PC-9 (cell line): ENCODE measurements at regions of chr6 and their contacts with region 1.

Region 1: GRCh38 chr6:55445648-55446204 is 118.5 kb downstream of the GFRAL start:
- DNase-seq: no peak
- H3K4me3 ChIP-seq: no peak overlapping the region
- H3K27ac ChIP-seq: no peak overlapping the region
- H3K4me1 ChIP-seq: no peaks in the 10 kb centered on the region
- H3K27me3 ChIP-seq: no peaks in the 10 kb centered on the region
- CTCF ChIP-seq: peak; percentile 82

Region 2: DNA sequence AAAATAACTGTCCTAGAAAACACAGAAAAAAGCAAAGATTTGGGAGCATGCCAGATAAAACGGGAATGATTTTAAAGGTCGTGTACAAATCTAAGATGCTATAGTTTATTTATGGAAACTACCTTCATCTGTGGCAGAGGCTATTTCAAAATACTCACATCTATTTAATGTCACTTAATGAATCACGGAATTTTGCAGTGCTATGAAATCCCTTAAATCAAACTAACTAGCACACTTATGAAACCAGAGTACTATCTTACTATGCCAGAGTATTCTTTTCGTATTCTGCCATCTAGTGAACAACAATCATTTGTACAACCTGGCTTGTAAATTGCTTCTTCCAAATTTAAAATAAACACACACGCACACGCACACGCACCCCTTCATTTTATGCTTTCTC is 507.6 kb after region 1 on chr6:
- CTCF ChIA-PET with region 1: interaction called, 3 read pairs
- POLR2A ChIA-PET with region 1: no interaction called
- intact Hi-C with region 1: loop called (anchors 2 kb)
- DNase-seq: no peak
- H3K4me3 ChIP-seq: no peak overlapping the region
- H3K27ac ChIP-seq: no peak overlapping the region
- H3K4me1 ChIP-seq: no peaks in the 10 kb centered on the region
- H3K27me3 ChIP-seq: no peaks in the 10 kb centered on the region
- CTCF ChIP-seq: peak; percentile 60

Region 3: GRCh38 chr6:56292505-56293181 is 846.9 kb after region 1 on chr6:
- CTCF ChIA-PET with region 1: no interaction called
- POLR2A ChIA-PET with region 1: no interaction called
- intact Hi-C with region 1: loop called (anchors 1 kb)
- DNase-seq: peak in 1 of 2 experiments; percentile 40
- H3K4me3 ChIP-seq: no peak overlapping the region
- H3K27ac ChIP-seq: no peak overlapping the region
- H3K4me1 ChIP-seq: peaks cover 5% of the 10 kb centered on the region
- H3K27me3 ChIP-seq: no peaks in the 10 kb centered on the region
- CTCF ChIP-seq: peak; percentile 79